MCF 10A (cell line): ENCODE measurements at regions of chrX and their contacts with region 1.

Region 1: GRCh38 chrX:43703211-43703791 is 47.2 kb downstream of the MAOA start:
- DNase-seq: peak; percentile 67
- H3K4me3 Mint-ChIP-seq: no peak overlapping the region
- H3K27ac Mint-ChIP-seq: peak overlapping the region; percentile 7
- H3K4me1 Mint-ChIP-seq: peaks cover 15% of the 10 kb centered on the region
- H3K27me3 Mint-ChIP-seq: peaks cover 60% of the 10 kb centered on the region
- CTCF ChIP-seq: no peak

Region 2: DNA sequence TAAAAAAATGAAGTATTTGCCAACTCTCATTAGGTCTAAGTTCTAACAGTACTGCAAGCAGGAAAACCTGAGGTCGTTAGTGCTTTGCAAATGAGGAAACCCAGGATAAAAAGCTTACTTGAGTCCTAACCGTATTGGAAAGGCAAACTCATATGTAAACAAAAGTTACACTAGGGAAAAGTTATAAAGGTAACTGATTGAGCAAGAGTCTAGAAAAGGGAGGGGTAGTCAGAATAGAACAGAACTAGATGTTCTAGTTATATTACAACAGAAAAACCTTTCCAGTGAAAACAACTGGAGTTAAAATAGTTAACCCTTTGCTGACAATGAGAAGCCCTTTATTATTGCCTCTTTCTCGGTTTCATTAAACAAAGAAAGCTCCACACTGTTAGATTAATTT is 113.6 kb before region 1 on chrX:
- CTCF ChIA-PET with region 1: no interaction called
- POLR2A ChIA-PET with region 1: interaction called, 16 read pairs
- intact Hi-C with region 1: no loop called
- DNase-seq: peak; percentile 85
- H3K4me3 Mint-ChIP-seq: peak overlapping the region; percentile 28
- H3K27ac Mint-ChIP-seq: peak overlapping the region; percentile 91
- H3K4me1 Mint-ChIP-seq: peaks cover 12% of the 10 kb centered on the region
- H3K27me3 Mint-ChIP-seq: peaks cover 16% of the 10 kb centered on the region
- CTCF ChIP-seq: no peak

Region 3: DNA sequence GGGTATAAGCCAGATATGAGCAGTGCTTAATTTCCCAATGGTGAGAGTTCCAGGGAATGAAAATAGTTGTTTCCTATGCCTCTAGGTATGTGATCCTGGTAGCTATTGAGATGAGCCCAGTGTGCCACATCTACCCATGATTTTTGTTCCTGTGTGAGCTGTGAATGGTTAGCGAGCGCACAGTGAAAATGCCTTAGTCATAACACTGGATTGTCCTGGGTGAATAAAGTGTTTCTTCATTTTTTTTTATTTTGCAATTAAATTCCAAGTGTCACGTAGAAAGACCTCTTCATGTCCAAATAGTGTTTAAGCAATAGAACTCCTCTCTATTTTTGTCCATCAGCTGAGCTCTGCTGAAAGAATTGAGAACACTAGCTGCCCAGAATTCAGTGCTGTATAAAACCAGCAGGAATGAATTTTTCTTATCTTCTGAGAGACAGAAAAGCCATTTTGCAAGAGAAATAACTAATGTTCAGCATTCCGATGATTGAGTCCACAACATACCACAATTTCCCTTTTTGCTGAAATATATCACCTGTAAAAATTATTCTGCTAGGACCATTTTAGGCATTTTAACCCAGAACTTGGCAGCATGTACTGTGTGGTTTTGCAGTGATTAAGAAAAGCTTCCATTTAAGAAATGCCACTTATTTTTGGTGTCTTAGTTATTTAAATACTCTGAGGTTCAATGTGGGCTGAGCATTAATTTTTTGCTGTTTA is 41.6 kb before region 1 on chrX:
- CTCF ChIA-PET with region 1: interaction called, 5 read pairs
- POLR2A ChIA-PET with region 1: interaction called, 80 read pairs
- intact Hi-C with region 1: loop called (anchors 5 kb)
- DNase-seq: peak; percentile 72
- H3K4me3 Mint-ChIP-seq: no peak overlapping the region
- H3K27ac Mint-ChIP-seq: no peak overlapping the region
- H3K4me1 Mint-ChIP-seq: no peaks in the 10 kb centered on the region
- H3K27me3 Mint-ChIP-seq: peaks cover 32% of the 10 kb centered on the region
- CTCF ChIP-seq: no peak

Region 4: DNA sequence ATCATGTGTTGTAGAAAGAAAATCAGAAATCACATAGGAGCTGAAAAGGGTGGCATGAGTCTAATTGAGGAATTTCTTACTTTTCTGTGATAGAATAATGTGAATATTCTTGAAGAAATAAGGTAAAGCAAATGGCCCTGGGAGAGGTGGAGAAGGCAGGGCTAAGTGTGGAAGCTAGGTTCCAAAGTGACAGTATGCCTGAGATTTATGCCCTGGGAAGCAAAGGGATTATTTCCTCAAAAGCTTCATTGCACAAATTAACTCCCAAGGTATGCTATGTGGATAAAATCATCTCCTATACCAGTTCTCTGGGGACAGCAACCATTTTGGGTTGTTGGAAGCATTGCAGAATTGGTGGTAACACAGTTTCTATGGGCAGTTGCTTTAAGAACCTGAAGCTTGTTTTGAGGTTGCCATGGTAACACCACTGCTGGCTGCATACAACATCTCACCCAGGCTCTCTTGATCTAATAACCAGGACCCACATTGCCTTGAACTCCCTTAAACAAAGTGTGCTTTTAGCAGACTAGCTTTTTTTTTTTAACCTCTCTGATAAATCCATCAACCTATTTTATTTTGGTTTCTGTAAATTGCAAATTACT is 26.2 kb before region 1 on chrX:
- CTCF ChIA-PET with region 1: interaction called, 3 read pairs
- POLR2A ChIA-PET with region 1: interaction called, 19 read pairs
- intact Hi-C with region 1: no loop called
- DNase-seq: peak; percentile 32
- H3K4me3 Mint-ChIP-seq: no peak overlapping the region
- H3K27ac Mint-ChIP-seq: no peak overlapping the region
- H3K4me1 Mint-ChIP-seq: peaks cover 9% of the 10 kb centered on the region
- H3K27me3 Mint-ChIP-seq: peaks cover 38% of the 10 kb centered on the region
- CTCF ChIP-seq: no peak